ENCODE measurements at regions of chr19 and their contacts with region 1.

Region 1: DNA sequence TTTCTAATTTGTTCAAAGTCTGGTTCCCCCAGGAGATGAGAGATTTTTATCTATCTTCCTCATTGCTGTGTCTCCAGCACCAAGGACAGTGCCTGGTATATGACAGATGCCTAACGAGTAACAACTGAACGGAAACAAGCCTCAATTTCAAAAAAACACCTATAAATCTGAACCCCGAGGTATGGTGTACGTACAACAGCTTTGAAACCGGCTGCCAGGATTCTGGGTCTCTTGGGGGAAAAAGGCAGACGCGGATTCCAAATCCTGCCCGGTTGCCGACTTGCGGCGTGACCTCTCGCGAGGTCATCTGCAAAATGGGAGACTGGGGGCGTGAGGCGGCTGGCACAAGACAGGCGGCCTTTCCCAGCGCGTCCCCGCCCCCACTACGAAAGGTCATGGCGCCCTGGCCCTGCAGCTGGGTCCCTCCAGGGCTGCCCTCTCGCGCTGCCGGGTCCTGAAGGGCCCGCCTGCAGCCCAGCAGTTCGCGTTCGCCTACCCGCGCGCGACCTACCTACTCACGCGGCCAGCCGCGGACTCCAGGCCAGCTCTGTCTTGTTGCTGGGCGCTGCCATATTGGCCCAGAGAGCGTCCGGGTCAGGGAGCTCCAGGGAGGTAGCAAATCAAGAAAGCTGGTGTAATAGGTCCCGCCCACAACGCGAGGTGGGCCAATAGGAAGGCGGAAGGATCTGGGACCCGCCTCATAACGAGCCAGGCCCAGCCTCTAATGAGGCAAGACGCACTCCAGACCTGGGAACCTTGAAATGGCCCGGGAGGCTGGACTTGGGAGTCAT is at the start of gene ECSIT:
- DNase-seq: peak; percentile 96 to 98
- ATAC-seq: peak; percentile 96 to 99 (median 99)
- H3K4me3 ChIP-seq: peak within 1 kb of the TSS; percentile 71 to 96 (median 85)
- H3K27ac ChIP-seq: peak within 1 kb of the TSS; percentile 66 to 97 (median 90)
- H3K4me1 ChIP-seq: peaks cover 6 to 35% (median 23%) of the 10 kb centered on the region in 9 donors
- H3K27me3 ChIP-seq: no peaks in the 10 kb centered on the region
- CTCF ChIP-seq: no peak
- total RNA-seq, gene ECSIT: 86.8 to 162 (median 131) TPM

Region 2: GRCh38 chr19:11256189-11256588 is 272.6 kb before region 1 on chr19:
- intact Hi-C with region 1: no loop called
- DNase-seq: peak; percentile 68 to 80
- ATAC-seq: peak; percentile 56 to 86 (median 72)
- H3K4me3 ChIP-seq: peak overlapping the region in 2 of 10 donors; percentile 3 to 10
- H3K27ac ChIP-seq: peak overlapping the region; percentile 41 to 95 (median 80)
- H3K4me1 ChIP-seq: peaks cover 18 to 79% (median 50%) of the 10 kb centered on the region in 9 donors
- H3K27me3 ChIP-seq: peaks cover 0 to 5% (median 0%) of the 10 kb centered on the region in 7 donors
- CTCF ChIP-seq: no peak

Region 3: GRCh38 chr19:11380653-11381534 is 147.9 kb before region 1 on chr19:
- intact Hi-C with region 1: no loop called
- DNase-seq: peak; percentile 93 to 97
- ATAC-seq: peak; percentile 88 to 94 (median 92)
- H3K4me3 ChIP-seq: peak overlapping the region; percentile 36 to 87 (median 65)
- H3K27ac ChIP-seq: peak overlapping the region; percentile 47 to 87 (median 80)
- H3K4me1 ChIP-seq: peaks cover 20 to 71% (median 52%) of the 10 kb centered on the region in 9 donors
- H3K27me3 ChIP-seq: peaks cover 0 to 24% (median 9%) of the 10 kb centered on the region in 7 donors
- CTCF ChIP-seq: peak; percentile 60 to 89 (median 77)

Region 4: DNA sequence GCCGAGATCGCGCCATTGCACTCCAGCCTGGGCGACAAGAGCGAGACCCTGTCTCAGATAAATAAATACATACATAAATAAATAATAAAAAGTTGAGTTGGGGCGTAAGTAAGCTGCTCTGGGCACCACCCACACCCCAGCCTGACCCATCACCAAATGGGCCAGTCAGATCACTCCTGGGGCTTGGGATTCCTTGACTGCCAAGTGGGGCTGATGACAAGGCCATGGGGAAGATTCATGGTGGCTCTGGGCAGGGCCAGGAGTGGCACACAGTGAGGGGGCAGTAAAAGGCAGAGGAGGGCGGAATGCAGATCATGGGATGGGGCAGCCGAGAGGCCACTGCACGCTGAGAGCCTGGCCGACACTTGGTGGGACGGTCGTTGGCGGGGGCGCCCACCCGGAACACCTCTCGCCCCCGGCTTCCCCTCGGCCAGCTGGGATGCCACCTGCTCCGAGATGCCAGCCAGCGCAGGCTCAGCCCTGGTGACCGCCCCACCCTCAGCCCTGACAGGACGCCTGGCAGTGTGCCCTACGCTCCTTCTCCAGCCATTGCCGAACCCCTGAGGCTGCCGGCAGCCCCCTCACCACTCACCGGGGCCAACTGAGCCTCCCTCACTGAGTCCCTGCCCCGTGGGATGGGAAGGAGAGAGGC is 34.0 kb before region 1 on chr19:
- intact Hi-C with region 1: no loop called
- DNase-seq: no peak
- ATAC-seq: no peak
- H3K4me3 ChIP-seq: no peak overlapping the region
- H3K27ac ChIP-seq: no peak overlapping the region
- H3K4me1 ChIP-seq: no peaks in the 10 kb centered on the region
- H3K27me3 ChIP-seq: no peaks in the 10 kb centered on the region
- CTCF ChIP-seq: no peak

Region 5: DNA sequence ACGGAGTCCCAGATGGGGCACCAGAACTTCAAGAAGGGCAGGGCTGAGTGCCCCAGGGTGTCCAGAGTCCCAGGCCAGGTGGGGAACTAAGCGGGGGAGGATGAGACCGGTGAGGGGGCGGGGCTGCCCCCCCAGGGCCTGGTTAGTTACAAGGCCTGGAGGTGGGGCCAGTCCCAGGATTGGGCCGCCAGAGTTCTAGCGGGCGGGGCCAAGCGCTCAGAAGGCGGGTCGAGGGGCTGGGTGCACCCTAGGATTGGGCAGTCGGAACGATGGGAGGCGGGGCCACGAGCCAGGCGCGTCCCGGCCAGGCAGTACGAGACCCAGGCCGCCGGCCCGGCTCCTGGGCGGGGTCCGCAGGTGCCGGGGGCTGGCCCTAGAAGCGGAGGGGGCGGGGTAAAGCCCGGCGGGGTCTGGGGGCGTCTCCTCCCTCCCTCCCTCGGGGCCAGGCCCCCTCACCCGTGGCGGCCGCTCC is 23.7 kb before region 1 on chr19:
- intact Hi-C with region 1: loop called in 2 of 10 experiments (anchors 1 to 2 kb)
- DNase-seq: peak; percentile 97 to 98
- ATAC-seq: peak; percentile 94 to 97 (median 96)
- H3K4me3 ChIP-seq: peak overlapping the region; percentile 70 to 100 (median 98)
- H3K27ac ChIP-seq: peak overlapping the region; percentile 93 to 99 (median 96)
- H3K4me1 ChIP-seq: peaks cover 0 to 16% (median 11%) of the 10 kb centered on the region in 9 donors
- H3K27me3 ChIP-seq: no peaks in the 10 kb centered on the region
- CTCF ChIP-seq: no peak

Region 6: GRCh38 chr19:11612816-11613511 is 84.2 kb after region 1 on chr19:
- intact Hi-C with region 1: no loop called
- DNase-seq: no peak
- ATAC-seq: no peak
- H3K4me3 ChIP-seq: no peak overlapping the region
- H3K27ac ChIP-seq: no peak overlapping the region
- H3K4me1 ChIP-seq: no peaks in the 10 kb centered on the region
- H3K27me3 ChIP-seq: no peaks in the 10 kb centered on the region
- CTCF ChIP-seq: no peak

Measured in heart right ventricle (tissue), 16 donors.